Naive thymus-derived CD4-positive, alpha-beta T cell (primary cell): ENCODE measurements at regions of chr11 and their contacts with region 1.

Region 1: GRCh38 chr11:17991783-17992433 is 20.9 kb downstream of the SERGEF start:
- DNase-seq: peak in 8 of 9 donors; percentile 23 to 65 (median 49)
- ATAC-seq: peak; percentile 82
- H3K4me3 ChIP-seq: no peak overlapping the region
- H3K4me3 Mint-ChIP-seq: no peak overlapping the region
- H3K27ac ChIP-seq: no peak overlapping the region
- H3K27ac Mint-ChIP-seq: no peak overlapping the region
- H3K4me1 ChIP-seq: no peaks in the 10 kb centered on the region
- H3K4me1 Mint-ChIP-seq: peaks cover 0 to 11% (median 3%) of the 10 kb centered on the region in 7 donors
- H3K27me3 ChIP-seq: no peaks in the 10 kb centered on the region
- H3K27me3 Mint-ChIP-seq: no peaks in the 10 kb centered on the region

Region 2: DNA sequence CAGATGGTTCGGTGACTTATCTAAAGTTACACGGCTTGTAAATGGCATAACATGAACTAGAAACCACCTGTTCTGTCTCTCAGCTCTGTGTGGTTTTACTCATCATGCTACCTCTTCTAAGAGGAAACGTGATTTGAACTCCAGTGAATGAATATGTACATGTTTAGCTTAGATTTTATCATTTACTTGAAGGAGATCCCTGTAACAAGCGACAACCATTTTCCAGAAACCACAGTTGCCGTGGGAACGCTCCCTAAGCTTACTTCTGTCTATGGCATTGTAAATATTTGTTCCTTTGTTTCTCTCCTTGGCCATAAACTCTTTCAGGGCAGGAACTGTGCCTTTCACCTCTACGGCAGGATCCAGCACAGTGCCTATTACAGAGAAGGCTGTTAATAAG is 71.2 kb after region 1 on chr11:
- CTCF ChIA-PET with region 1: no interaction called
- POLR2A ChIA-PET with region 1: no interaction called
- intact Hi-C with region 1: loop called in 1 of 2 experiments (anchors 5 kb)
- DNase-seq: no peak
- ATAC-seq: no peak
- H3K4me3 ChIP-seq: no peak overlapping the region
- H3K4me3 Mint-ChIP-seq: no peak overlapping the region
- H3K27ac ChIP-seq: no peak overlapping the region
- H3K27ac Mint-ChIP-seq: no peak overlapping the region
- H3K4me1 ChIP-seq: no peaks in the 10 kb centered on the region
- H3K4me1 Mint-ChIP-seq: no peaks in the 10 kb centered on the region
- H3K27me3 ChIP-seq: no peaks in the 10 kb centered on the region
- H3K27me3 Mint-ChIP-seq: peaks cover 0 to 2% (median 0%) of the 10 kb centered on the region in 5 donors

Region 3: GRCh38 chr11:18105802-18106574 is 114.1 kb after region 1 on chr11 and contains the start of gene SAAL1:
- CTCF ChIA-PET with region 1: interaction called, 14 read pairs
- POLR2A ChIA-PET with region 1: no interaction called
- intact Hi-C with region 1: loop called (anchors 1 kb)
- DNase-seq: peak; percentile 80 to 95 (median 84)
- ATAC-seq: peak; percentile 99
- H3K4me3 ChIP-seq: peak within 1 kb of the TSS; percentile 93
- H3K4me3 Mint-ChIP-seq: peak within 1 kb of the TSS; percentile 84 to 95 (median 93)
- H3K27ac ChIP-seq: peak within 1 kb of the TSS; percentile 78
- H3K27ac Mint-ChIP-seq: peak within 1 kb of the TSS; percentile 77 to 93 (median 90)
- H3K4me1 ChIP-seq: peaks cover 14 to 15% of the 10 kb centered on the region in 2 donors
- H3K4me1 Mint-ChIP-seq: peaks cover 21 to 54% (median 42%) of the 10 kb centered on the region in 7 donors
- H3K27me3 ChIP-seq: no peaks in the 10 kb centered on the region
- H3K27me3 Mint-ChIP-seq: peaks cover 0 to 15% (median 0%) of the 10 kb centered on the region in 5 donors
- total RNA-seq, gene SAAL1: 16.0 to 25.3 (median 19.3) TPM

Region 4: GRCh38 chr11:18768472-18768901 is 776.6 kb after region 1 on chr11:
- CTCF ChIA-PET with region 1: interaction called, 3 read pairs
- POLR2A ChIA-PET with region 1: no interaction called
- intact Hi-C with region 1: loop called in 1 of 2 experiments (anchors 1 kb)
- DNase-seq: no peak
- ATAC-seq: no peak
- H3K4me3 ChIP-seq: no peak overlapping the region
- H3K4me3 Mint-ChIP-seq: no peak overlapping the region
- H3K27ac ChIP-seq: no peak overlapping the region
- H3K27ac Mint-ChIP-seq: no peak overlapping the region
- H3K4me1 ChIP-seq: no peaks in the 10 kb centered on the region
- H3K4me1 Mint-ChIP-seq: peaks cover 0 to 28% (median 0%) of the 10 kb centered on the region in 7 donors
- H3K27me3 ChIP-seq: no peaks in the 10 kb centered on the region
- H3K27me3 Mint-ChIP-seq: peaks cover 4 to 27% (median 16%) of the 10 kb centered on the region in 5 donors